HEK293 (cell line): ENCODE measurements at regions of chr2 and their contacts with region 1.

Region 1: DNA sequence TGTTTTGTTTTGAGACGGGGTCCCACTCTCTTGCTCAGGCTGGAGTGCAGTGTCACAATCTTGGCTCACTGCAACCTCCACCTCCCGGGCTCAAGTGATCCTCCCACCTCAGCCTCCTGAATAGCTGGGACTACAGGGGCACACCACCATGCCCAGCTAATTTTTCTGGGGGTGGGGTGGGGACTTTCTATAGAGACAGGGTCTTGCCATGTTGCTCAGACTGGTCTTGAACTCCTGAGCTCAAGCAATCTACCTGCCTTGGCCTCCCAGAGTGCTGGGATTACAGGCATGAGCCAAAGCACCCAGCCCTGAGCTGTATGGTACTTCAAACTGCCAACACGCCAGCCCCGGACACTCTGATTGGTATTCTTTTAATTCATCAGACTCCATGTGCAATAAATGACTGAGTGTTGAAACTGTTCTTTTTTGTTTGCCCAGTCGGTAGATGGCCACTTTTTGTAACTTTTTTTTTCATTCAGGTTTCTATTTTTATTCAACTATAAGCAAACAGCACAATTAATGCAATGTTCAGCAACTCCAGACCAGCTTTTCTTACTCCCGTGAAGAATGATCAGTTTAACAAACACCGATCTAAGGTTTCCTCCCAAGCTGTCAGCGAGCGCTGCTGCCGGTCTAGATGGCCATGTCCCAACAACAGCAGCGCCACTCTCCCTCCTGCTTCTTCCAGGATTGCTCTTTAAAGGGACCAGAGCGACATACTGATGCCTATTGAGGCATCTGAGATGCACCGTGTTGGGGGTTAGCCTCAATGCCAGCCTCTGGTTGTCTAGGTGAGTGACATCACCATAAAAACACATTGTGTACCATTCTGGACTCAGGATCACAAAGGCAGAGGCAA is 12.5 kb upstream of the TGOLN2 start:
- H3K4me3 ChIP-seq: no peak overlapping the region
- H3K27ac ChIP-seq: no peak overlapping the region
- H3K4me1 ChIP-seq: no peaks in the 10 kb centered on the region
- CTCF ChIP-seq: no peak

Region 2: GRCh38 chr2:85327822-85328617 is 12.2 kb before region 1 on chr2 and contains the start of gene TGOLN2:
- CTCF ChIA-PET with region 1: no interaction called
- POLR2A ChIA-PET with region 1: interaction called, 10 read pairs
- H3K4me3 ChIP-seq: peak within 1 kb of the TSS; percentile 85
- H3K27ac ChIP-seq: peak within 1 kb of the TSS; percentile 93
- H3K4me1 ChIP-seq: no peaks in the 10 kb centered on the region
- CTCF ChIP-seq: peak; percentile 83